ENCODE measurements at regions of chr13 and their contacts with region 1.

Region 1: GRCh38 chr13:51844862-51845573 is at the start of gene TMEM272:
- DNase-seq: peak in 1 of 2 experiments; percentile 94
- H3K4me3 ChIP-seq: no peak within 1 kb of the TSS
- H3K27ac ChIP-seq: no peak within 1 kb of the TSS
- H3K4me1 ChIP-seq: 0 out of 7 replicates have a peak, but pooled peaks cover 0 to 2% (median 0%) of the 10 kb centered on the region in 4 experiments
- H3K27me3 ChIP-seq: no peaks in the 10 kb centered on the region
- CTCF ChIP-seq: peak; percentile 75 to 88 (median 87)
- EP300 ChIP-seq: no peak
- POLR2A ChIP-seq: no peak
- RAD21 ChIP-seq: peak; percentile 50 to 60
- total RNA-seq, gene TMEM272: not detected in 2 replicates

Region 2: GRCh38 chr13:51826606-51827005 is 18.4 kb before region 1 on chr13:
- CTCF ChIA-PET with region 1: interaction called, 46 read pairs
- POLR2A ChIA-PET with region 1: no interaction called
- DNase-seq: no peak
- H3K4me3 ChIP-seq: no peak overlapping the region
- H3K27ac ChIP-seq: no peak overlapping the region
- H3K4me1 ChIP-seq: no peaks in the 10 kb centered on the region
- H3K27me3 ChIP-seq: no peaks in the 10 kb centered on the region
- CTCF ChIP-seq: no peak
- EP300 ChIP-seq: no peak
- POLR2A ChIP-seq: no peak
- RAD21 ChIP-seq: no peak

Region 3: GRCh38 chr13:51832471-51833152 is 12.4 kb before region 1 on chr13:
- CTCF ChIA-PET with region 1: interaction called, 46 read pairs
- POLR2A ChIA-PET with region 1: interaction called, 4 read pairs
- DNase-seq: no peak
- H3K4me3 ChIP-seq: no peak overlapping the region
- H3K27ac ChIP-seq: no peak overlapping the region
- H3K4me1 ChIP-seq: no peaks in the 10 kb centered on the region
- H3K27me3 ChIP-seq: no peaks in the 10 kb centered on the region
- CTCF ChIP-seq: peak; percentile 64 to 70 (median 67)
- EP300 ChIP-seq: no peak
- POLR2A ChIP-seq: no peak
- RAD21 ChIP-seq: peak; percentile 74 to 75

Region 4: DNA sequence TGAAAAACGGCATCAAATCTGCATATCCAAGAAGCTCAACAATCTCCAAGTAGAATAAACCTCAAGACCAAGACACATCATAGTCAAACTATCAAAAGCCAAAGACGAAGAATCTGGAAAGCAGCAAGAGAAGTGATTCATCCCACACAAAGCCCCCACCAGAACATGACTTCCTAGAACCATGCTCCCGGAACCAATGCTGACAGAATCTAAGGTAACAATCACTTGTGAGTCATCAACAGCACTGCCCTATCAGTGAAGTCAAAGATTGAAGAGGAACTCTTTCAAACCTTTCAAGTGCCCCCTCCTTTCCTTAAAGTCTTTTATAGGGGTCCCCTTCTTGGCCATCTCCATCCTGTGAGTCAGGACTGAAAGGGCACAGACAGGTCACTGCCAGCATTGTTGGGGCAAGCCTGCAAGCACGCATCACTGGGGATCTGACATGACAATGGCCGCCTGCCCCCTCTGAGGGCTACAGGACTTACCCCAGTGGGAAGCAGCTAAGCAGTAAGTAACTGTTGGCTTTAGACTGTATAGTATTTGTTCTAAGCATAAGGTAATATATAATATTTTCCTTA is 16.8 kb after region 1 on chr13 and contains the start of gene CCDC70:
- CTCF ChIA-PET with region 1: interaction called, 15 read pairs
- POLR2A ChIA-PET with region 1: no interaction called
- DNase-seq: no peak
- H3K4me3 ChIP-seq: no peak within 1 kb of the TSS
- H3K27ac ChIP-seq: no peak within 1 kb of the TSS
- H3K4me1 ChIP-seq: no peaks in the 10 kb centered on the region
- H3K27me3 ChIP-seq: peaks cover 0 to 2% (median 0%) of the 10 kb centered on the region in 4 experiments; a peak in 1 of 7 replicates
- CTCF ChIP-seq: no peak
- EP300 ChIP-seq: no peak
- POLR2A ChIP-seq: no peak
- RAD21 ChIP-seq: no peak
- total RNA-seq, gene CCDC70: not detected in 2 replicates

Measured in H1 (cell line).